Adrenal gland (tissue), 19 donors: ENCODE measurements at regions of chr7 and their contacts with region 1.

Region 1: GRCh38 chr7:22110227-22110839 is 164.6 kb upstream of the CDCA7L start:
- DNase-seq: peak; percentile 65 to 91 (median 76)
- H3K4me3 ChIP-seq: no peak overlapping the region
- H3K27ac ChIP-seq: no peak overlapping the region
- H3K4me1 ChIP-seq: no peaks in the 10 kb centered on the region
- H3K27me3 ChIP-seq: no peaks in the 10 kb centered on the region
- CTCF ChIP-seq: peak; percentile 73 to 95 (median 90)
- POLR2A ChIP-seq: no peak

Region 2: DNA sequence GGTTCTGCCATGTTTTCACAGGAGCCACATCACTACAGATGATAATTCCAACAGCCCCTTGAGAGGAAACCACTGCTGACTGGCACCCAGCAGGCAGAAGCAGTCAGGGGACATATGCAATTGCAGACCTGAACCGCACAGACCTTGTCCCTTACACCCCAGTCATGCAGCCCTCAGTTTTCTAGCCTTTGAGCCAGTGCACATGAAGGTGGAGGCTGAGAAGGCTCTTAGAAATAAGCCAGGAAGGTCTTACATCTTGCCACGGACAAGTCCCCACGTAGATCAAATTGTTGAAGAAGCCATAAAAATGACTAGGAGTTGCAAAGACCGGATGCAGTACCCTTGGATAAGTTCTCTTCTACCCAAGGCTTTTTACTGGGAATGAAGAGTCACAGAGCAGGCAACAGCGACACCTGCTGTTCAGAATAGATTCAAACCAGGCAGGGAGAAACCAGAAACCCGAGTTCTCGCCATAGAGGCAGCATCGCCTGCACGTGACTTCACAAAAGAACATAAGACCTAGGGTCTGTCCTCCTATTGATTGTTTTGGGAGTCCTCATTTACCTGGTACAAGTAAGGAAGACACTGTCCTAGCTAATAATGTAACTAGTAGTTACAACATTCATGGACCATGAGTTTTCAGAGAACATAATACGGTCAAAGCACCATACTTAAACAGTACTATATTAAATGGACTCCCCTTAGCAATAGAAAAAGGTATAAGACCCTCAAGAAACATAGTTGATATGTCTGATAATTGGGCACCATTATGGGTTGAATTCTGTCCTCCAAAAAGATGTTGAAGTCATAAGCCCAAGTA is 378.5 kb after region 1 on chr7:
- intact Hi-C with region 1: loop called (anchors 2 to 5 kb)
- DNase-seq: peak; percentile 52 to 89 (median 70)
- H3K4me3 ChIP-seq: no peak overlapping the region
- H3K27ac ChIP-seq: no peak overlapping the region
- H3K4me1 ChIP-seq: no peaks in the 10 kb centered on the region
- H3K27me3 ChIP-seq: no peaks in the 10 kb centered on the region
- CTCF ChIP-seq: peak; percentile 85 to 98 (median 90)
- POLR2A ChIP-seq: no peak